ENCODE measurements at regions of chr16 and their contacts with region 1.

Region 1: DNA sequence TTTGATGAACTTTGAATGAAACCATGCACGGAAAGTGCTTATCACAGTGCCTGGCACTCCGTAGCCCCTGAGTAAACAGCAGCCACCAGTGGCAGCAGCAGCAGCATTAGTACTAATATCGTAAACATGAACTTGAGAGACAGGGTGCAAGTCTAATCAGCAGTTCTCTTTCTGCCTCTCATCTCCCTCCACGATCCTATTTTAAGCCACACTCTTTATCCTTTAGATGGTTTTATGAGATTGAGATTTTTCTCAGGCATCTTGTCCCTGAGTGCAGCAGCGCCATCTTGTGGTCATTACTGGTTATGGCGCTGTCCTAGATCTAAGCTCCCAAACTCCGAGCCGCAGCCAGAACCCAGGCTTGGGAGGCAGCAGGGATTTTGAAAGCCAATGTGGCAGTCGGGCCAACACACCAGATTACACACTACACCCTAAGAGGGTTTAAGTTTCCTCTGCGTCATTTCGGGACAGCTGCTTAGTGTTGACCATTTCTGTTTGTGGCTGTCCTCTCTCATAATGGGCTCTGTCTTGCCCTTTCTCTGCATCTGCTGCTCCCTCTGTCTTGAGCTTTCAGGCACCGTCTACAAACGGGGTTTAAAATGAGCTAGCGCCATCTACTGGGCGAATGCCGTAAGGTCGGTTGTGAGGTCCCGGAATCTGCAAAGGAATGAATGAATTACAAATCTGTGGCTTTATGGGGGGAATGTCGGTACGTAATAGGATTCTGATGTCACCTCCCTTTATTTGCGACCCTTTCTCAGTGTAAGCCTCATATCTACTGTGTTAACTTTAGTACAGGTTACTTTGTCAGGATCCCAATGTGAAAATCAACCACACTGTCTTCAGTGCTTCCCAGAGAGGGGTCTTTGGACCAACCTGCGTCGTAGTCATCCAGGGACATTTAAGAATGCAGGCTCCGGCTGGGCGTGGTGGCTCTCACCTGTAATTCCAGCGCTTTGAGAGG is 64.5 kb downstream of the CYLD start:
- DNase-seq: peak; percentile 90
- ATAC-seq: peak; percentile 88
- H3K4me3 Mint-ChIP-seq: peak overlapping the region; percentile 61
- H3K27ac Mint-ChIP-seq: no peak overlapping the region
- H3K4me1 Mint-ChIP-seq: peaks cover 28% of the 10 kb centered on the region
- H3K27me3 Mint-ChIP-seq: no peaks in the 10 kb centered on the region
- CTCF ChIP-seq: peak; percentile 94

Region 2: DNA sequence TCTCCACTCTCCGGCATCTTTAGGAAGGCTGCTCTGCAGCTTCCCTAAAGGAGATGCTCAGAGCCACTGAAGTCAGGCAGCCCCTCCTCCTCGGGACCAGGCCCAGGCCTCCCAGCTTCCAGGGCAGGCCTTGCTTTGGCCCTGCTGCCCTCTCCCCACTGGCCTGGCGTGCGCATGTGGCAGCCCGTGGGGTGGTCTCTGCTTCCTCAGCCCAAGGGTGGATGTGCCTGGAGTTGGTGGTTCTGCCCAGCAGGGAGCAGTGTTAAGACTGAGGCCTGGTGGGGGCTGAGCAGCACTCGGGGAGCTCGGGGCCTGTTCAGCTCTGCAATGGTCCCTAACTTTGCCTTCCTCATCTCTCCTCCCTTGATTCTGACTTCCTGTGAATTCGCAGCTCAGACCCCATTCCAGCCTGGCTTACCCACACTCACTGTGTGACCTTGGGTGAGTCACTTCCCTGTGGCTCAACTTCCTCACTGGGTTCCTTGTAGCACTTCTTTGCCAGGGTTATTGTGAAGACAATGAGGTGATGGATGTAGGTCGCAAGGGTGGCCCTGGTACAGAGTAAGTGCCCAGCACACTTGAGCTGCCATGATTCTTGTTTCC is 194.9 kb before region 1 on chr16:
- CTCF ChIA-PET with region 1: interaction called, 26 read pairs
- POLR2A ChIA-PET with region 1: no interaction called
- DNase-seq: no peak
- ATAC-seq: no peak
- H3K4me3 Mint-ChIP-seq: no peak overlapping the region
- H3K27ac Mint-ChIP-seq: no peak overlapping the region
- H3K4me1 Mint-ChIP-seq: peaks cover 27% of the 10 kb centered on the region
- H3K27me3 Mint-ChIP-seq: no peaks in the 10 kb centered on the region
- CTCF ChIP-seq: no peak

Region 3: GRCh38 chr16:50681021-50681885 is 125.1 kb before region 1 on chr16 and contains the start of gene SNX20:
- CTCF ChIA-PET with region 1: interaction called, 34 read pairs
- POLR2A ChIA-PET with region 1: no interaction called
- DNase-seq: no peak
- ATAC-seq: no peak
- H3K4me3 Mint-ChIP-seq: no peak within 1 kb of the TSS
- H3K27ac Mint-ChIP-seq: no peak within 1 kb of the TSS
- H3K4me1 Mint-ChIP-seq: no peaks in the 10 kb centered on the region
- H3K27me3 Mint-ChIP-seq: no peaks in the 10 kb centered on the region
- CTCF ChIP-seq: no peak
- total RNA-seq, gene SNX20: 0.14 TPM in 1 of 3 replicates, not detected in the others

Region 4: GRCh38 chr16:50747207-50747956 is 59.0 kb before region 1 on chr16:
- CTCF ChIA-PET with region 1: interaction called, 42 read pairs
- POLR2A ChIA-PET with region 1: no interaction called
- DNase-seq: no peak
- ATAC-seq: peak; percentile 34; the same call in 1 of the 2 replicates
- H3K4me3 Mint-ChIP-seq: no peak overlapping the region
- H3K27ac Mint-ChIP-seq: peak overlapping the region; percentile 62
- H3K4me1 Mint-ChIP-seq: peaks cover 32% of the 10 kb centered on the region
- H3K27me3 Mint-ChIP-seq: no peaks in the 10 kb centered on the region
- CTCF ChIP-seq: no peak

Region 5: GRCh38 chr16:50830698-50831097 is 24.3 kb after region 1 on chr16:
- CTCF ChIA-PET with region 1: interaction called, 17 read pairs
- POLR2A ChIA-PET with region 1: interaction called, 3 read pairs
- DNase-seq: no peak
- ATAC-seq: no peak
- H3K4me3 Mint-ChIP-seq: no peak overlapping the region
- H3K27ac Mint-ChIP-seq: no peak overlapping the region
- H3K4me1 Mint-ChIP-seq: no peaks in the 10 kb centered on the region
- H3K27me3 Mint-ChIP-seq: no peaks in the 10 kb centered on the region
- CTCF ChIP-seq: no peak

Region 6: DNA sequence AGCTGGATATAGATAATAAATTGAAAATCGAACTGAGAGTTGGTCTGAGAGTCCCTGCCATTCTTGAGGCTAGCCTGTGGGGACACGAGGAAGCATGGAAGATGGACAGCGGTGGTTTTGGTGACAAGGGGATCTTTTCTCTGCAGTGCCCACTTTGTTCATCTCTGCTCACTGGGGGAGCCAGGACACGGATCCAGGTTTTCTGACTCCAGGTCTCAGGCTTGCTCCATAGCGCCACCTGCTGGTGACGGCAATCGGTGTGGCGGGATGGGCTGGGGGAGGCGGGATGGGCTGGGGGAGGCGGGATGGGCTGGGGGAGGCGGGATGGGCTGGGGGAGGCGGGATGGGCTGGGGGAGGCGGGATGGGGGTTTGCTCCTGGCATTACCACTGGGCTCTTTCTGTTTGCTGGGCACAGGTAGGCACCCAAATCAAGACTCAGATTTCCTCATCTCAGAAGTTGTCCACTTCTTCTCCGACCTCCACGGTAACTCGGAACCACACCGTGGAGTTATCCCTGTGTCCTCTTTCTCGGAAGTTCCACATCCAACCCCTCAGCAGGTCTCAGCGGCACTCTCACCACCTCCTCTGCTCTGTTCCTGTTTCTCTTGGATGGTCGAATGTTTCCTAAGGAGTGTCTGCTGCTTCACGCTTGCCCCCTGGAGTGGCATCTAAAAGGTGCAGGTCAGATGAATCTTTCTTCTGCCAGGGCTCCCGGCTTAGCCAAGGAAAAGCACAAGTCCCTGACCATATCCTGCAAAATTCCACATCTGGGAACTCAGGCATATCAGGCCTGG is 77.9 kb after region 1 on chr16:
- CTCF ChIA-PET with region 1: interaction called, 23 read pairs
- POLR2A ChIA-PET with region 1: no interaction called
- DNase-seq: peak; percentile 87
- ATAC-seq: peak; percentile 45
- H3K4me3 Mint-ChIP-seq: peak overlapping the region; percentile 43
- H3K27ac Mint-ChIP-seq: no peak overlapping the region
- H3K4me1 Mint-ChIP-seq: peaks cover 16% of the 10 kb centered on the region
- H3K27me3 Mint-ChIP-seq: peaks cover 4% of the 10 kb centered on the region
- CTCF ChIP-seq: peak; percentile 79

Measured in WTC11 (cell line).